ENCODE measurements at regions of chr1 and their contacts with region 1.

Region 1: GRCh38 chr1:28668191-28668955 is at the start of gene GMEB1:
- DNase-seq: peak; percentile 79 to 86 (median 84)
- H3K4me3 ChIP-seq: peak within 1 kb of the TSS; percentile 89 to 92
- H3K4me3 Mint-ChIP-seq: peak within 1 kb of the TSS; percentile 92 to 97 (median 93)
- H3K27ac ChIP-seq: peak within 1 kb of the TSS; percentile 88
- H3K27ac Mint-ChIP-seq: peak within 1 kb of the TSS; percentile 98 to 100 (median 98)
- H3K4me1 ChIP-seq: peaks cover 21% of the 10 kb centered on the region
- H3K4me1 Mint-ChIP-seq: peaks cover 13 to 26% (median 18%) of the 10 kb centered on the region in 4 donors
- H3K27me3 ChIP-seq: no peaks in the 10 kb centered on the region
- H3K27me3 Mint-ChIP-seq: no peaks in the 10 kb centered on the region
- total RNA-seq, gene GMEB1: 21.8 to 21.9 TPM

Region 2: DNA sequence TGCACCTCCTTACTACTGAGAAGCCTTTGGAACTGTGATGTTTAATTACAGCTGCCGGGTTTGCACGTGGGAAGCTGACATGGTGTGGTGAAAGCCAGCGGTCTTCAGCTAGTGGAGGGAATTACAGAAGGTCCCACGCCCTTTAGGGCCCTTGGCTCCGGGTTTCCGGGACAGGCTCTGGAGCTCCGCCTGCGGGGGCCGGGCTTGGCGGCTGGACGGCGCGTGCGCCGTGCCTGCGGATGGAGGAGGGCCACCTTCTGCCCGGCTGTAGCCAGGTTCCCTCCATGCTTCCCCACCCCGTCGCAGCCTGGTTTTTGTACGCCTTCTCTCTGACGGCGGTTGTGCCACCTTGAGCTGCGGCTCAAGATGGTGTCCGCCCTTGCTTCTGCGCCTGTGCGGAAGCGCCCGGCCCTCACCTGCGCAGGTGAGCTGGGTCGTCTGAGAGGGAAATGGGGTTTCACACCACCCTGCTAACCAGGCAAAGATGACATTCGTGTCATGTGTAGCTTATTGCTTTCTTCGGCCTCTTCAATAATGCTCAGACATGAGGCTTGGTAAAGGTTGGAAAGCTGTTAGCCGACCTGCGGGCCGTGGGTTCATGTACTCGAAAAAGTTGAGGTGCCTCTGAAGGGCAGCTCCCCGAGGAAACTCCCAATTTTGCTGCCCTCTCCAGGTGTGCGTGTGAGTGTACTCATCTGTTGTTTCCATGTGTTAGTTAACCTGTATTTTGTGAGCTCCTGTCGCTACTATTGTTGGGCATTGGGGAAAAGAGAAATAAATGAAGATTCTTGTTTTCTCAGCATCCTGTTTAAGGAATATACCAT is 107.0 kb after region 1 on chr1:
- CTCF ChIA-PET with region 1: no interaction called
- POLR2A ChIA-PET with region 1: interaction called, 13 read pairs
- intact Hi-C with region 1: no loop called
- DNase-seq: peak; percentile 66 to 81 (median 74)
- H3K4me3 ChIP-seq: peak overlapping the region; percentile 8 to 64
- H3K4me3 Mint-ChIP-seq: peak overlapping the region; percentile 81 to 91 (median 85)
- H3K27ac ChIP-seq: peak overlapping the region; percentile 28
- H3K27ac Mint-ChIP-seq: peak overlapping the region; percentile 70 to 93 (median 87)
- H3K4me1 ChIP-seq: peaks cover 6% of the 10 kb centered on the region
- H3K4me1 Mint-ChIP-seq: peaks cover 5 to 13% (median 9%) of the 10 kb centered on the region in 4 donors
- H3K27me3 ChIP-seq: no peaks in the 10 kb centered on the region
- H3K27me3 Mint-ChIP-seq: no peaks in the 10 kb centered on the region